Activated naive CD4-positive, alpha-beta T cell treated with anti-CD3 and anti-CD28 coated beads for 36 hours (primary cell): ENCODE measurements at regions of chr6 and their contacts with region 1.

Region 1: GRCh38 chr6:167485186-167485978 is 160.5 kb downstream of the TTLL2 start:
- DNase-seq: no peak
- H3K4me3 Mint-ChIP-seq: no peak overlapping the region
- H3K27ac Mint-ChIP-seq: no peak overlapping the region
- H3K4me1 Mint-ChIP-seq: peaks cover 7% of the 10 kb centered on the region
- H3K27me3 Mint-ChIP-seq: peaks cover 20% of the 10 kb centered on the region

Region 2: GRCh38 chr6:167722634-167723309 is 237.4 kb after region 1 on chr6:
- CTCF ChIA-PET with region 1: no interaction called
- intact Hi-C with region 1: no loop called
- DNase-seq: no peak
- H3K4me3 Mint-ChIP-seq: no peak overlapping the region
- H3K27ac Mint-ChIP-seq: no peak overlapping the region
- H3K4me1 Mint-ChIP-seq: no peaks in the 10 kb centered on the region
- H3K27me3 Mint-ChIP-seq: peaks cover 48% of the 10 kb centered on the region

Region 3: GRCh38 chr6:167898673-167899311 is 413.4 kb after region 1 on chr6:
- CTCF ChIA-PET with region 1: interaction called, 3 read pairs
- intact Hi-C with region 1: loop called (anchors 1 kb)
- DNase-seq: no peak
- H3K4me3 Mint-ChIP-seq: no peak overlapping the region
- H3K27ac Mint-ChIP-seq: no peak overlapping the region
- H3K4me1 Mint-ChIP-seq: no peaks in the 10 kb centered on the region
- H3K27me3 Mint-ChIP-seq: no peaks in the 10 kb centered on the region